Mammary epithelial cell (primary cell): ENCODE measurements at regions of chr13 and their contacts with region 1.

Region 1: DNA sequence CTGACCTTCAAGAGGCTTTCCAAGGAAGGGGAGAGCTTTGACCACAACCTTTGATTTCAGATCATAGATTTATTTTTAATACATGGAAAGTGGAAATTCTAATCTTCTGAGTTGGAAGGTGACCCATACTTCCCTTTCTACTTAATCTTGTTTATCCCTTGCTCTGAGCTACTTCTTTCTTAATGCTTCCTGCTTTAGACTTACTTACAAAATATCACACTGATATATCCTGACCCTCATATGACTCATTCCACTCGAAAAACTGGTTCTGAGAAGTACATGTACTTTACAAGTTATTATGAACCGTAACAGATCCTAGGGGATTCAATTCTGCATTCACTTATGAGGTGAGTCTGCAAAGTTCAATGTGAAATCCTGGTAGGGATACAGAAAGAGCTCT is 76.2 kb upstream of the IRS2 start:
- DNase-seq: peak; percentile 80
- H3K4me3 ChIP-seq: no peak overlapping the region
- H3K27ac ChIP-seq: no peak overlapping the region
- H3K4me1 ChIP-seq: peaks cover 22% of the 10 kb centered on the region
- H3K27me3 ChIP-seq: no peaks in the 10 kb centered on the region
- CTCF ChIP-seq: no peak

Region 2: DNA sequence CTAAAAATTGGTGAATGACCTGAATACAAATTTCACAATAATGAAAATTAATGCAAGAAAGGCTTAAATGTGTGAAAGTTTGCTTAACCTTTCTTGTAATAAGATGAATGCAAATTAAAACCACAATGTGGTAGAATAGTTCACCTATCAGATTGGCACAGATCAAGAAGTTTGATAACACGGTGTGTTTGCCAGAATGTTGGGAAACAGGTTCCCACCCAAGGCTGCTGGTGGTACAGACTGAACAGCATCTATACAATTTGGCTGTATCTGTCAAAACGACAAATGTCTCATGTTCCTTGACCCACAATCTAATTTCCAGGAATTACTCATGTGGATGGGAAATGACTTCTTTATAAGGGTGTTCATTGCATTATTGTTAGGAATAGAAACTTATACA is 67.6 kb before region 1 on chr13:
- CTCF ChIA-PET with region 1: no interaction called
- dilution Hi-C with region 1: loop called (anchors 5 kb)
- in situ Hi-C with region 1: no loop called
- intact Hi-C with region 1: no loop called
- DNase-seq: no peak
- H3K4me3 ChIP-seq: no peak overlapping the region
- H3K27ac ChIP-seq: no peak overlapping the region
- H3K4me1 ChIP-seq: peaks cover 9% of the 10 kb centered on the region
- H3K27me3 ChIP-seq: no peaks in the 10 kb centered on the region
- CTCF ChIP-seq: no peak

Region 3: GRCh38 chr13:110187641-110188161 is 325.1 kb after region 1 on chr13:
- CTCF ChIA-PET with region 1: no interaction called
- dilution Hi-C with region 1: no loop called
- in situ Hi-C with region 1: no loop called
- intact Hi-C with region 1: no loop called
- DNase-seq: peak; percentile 47
- H3K4me3 ChIP-seq: no peak overlapping the region
- H3K27ac ChIP-seq: no peak overlapping the region
- H3K4me1 ChIP-seq: no peaks in the 10 kb centered on the region
- H3K27me3 ChIP-seq: no peaks in the 10 kb centered on the region
- CTCF ChIP-seq: no peak